CD4-positive, alpha-beta memory T cell (primary cell): ENCODE measurements at regions of chr17 and their contacts with region 1.

Region 1: GRCh38 chr17:30323895-30324319 is 9.9 kb downstream of the TMIGD1 start:
- DNase-seq: peak; percentile 34 to 71 (median 48)
- H3K4me3 ChIP-seq: peak overlapping the region; percentile 9 to 14
- H3K4me3 Mint-ChIP-seq: peak overlapping the region; percentile 62 to 80 (median 70)
- H3K27ac ChIP-seq: peak overlapping the region; percentile 45
- H3K27ac Mint-ChIP-seq: peak overlapping the region; percentile 82 to 96 (median 93)
- H3K4me1 ChIP-seq: peaks cover 48% of the 10 kb centered on the region
- H3K4me1 Mint-ChIP-seq: peaks cover 36 to 54% (median 41%) of the 10 kb centered on the region in 4 donors
- H3K27me3 ChIP-seq: no peaks in the 10 kb centered on the region
- H3K27me3 Mint-ChIP-seq: no peaks in the 10 kb centered on the region

Region 2: GRCh38 chr17:30021708-30022317 is 302.1 kb before region 1 on chr17:
- CTCF ChIA-PET with region 1: no interaction called
- POLR2A ChIA-PET with region 1: no interaction called
- intact Hi-C with region 1: no loop called
- DNase-seq: peak; percentile 25 to 53 (median 48)
- H3K4me3 ChIP-seq: no peak overlapping the region
- H3K4me3 Mint-ChIP-seq: no peak overlapping the region
- H3K27ac ChIP-seq: no peak overlapping the region
- H3K27ac Mint-ChIP-seq: no peak overlapping the region
- H3K4me1 ChIP-seq: no peaks in the 10 kb centered on the region
- H3K4me1 Mint-ChIP-seq: peaks cover 0 to 2% (median under 1%) of the 10 kb centered on the region in 4 donors
- H3K27me3 ChIP-seq: peaks cover 2% of the 10 kb centered on the region
- H3K27me3 Mint-ChIP-seq: peaks cover 0 to 2% of the 10 kb centered on the region in 2 donors

Region 3: DNA sequence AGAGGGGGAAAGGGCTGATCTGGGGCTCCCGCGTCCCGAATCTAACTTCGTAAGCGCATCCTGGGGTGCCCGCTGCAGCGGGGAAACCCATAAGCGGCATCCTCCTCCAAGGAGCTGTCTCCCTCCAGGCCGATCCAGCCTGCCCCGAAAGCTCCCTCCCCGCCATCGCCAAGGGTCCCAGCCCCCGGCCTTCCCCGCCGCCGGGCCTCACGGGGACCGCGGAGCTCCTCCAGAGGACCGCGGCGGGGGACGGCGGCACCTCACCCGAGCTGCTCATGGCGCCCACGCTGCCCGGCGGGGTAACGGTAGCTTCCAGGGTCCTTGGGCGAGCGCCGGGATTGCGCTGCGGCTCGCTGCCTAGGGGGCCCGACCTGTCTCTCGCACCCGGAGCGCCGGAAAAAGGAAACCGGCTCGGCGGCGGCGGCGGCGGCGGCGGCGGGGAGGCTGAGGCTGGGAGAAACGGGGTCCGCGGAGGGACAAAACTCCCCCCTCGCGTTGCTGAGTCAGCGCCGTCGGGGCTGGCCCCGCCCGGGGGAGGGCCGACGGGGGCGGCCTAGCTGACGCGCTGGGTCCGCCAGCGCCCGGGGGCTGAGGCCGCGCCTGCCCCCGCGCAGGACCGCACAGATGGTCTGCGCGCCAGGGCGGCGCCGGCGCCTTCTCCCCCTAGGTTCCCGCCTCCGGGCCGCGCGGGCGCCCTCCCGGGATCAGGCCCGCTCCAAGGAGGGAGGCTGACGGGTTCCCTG is 32.2 kb before region 1 on chr17 and contains the start of gene BLMH:
- CTCF ChIA-PET with region 1: interaction called, 25 read pairs
- POLR2A ChIA-PET with region 1: interaction called, 83 read pairs
- intact Hi-C with region 1: loop called (anchors 1 kb)
- DNase-seq: peak; percentile 68 to 82 (median 76)
- H3K4me3 ChIP-seq: peak within 1 kb of the TSS; percentile 77 to 80
- H3K4me3 Mint-ChIP-seq: peak within 1 kb of the TSS; percentile 89 to 97 (median 96)
- H3K27ac ChIP-seq: peak within 1 kb of the TSS; percentile 68
- H3K27ac Mint-ChIP-seq: peak within 1 kb of the TSS; percentile 87 to 94 (median 92)
- H3K4me1 ChIP-seq: peaks cover 24% of the 10 kb centered on the region
- H3K4me1 Mint-ChIP-seq: peaks cover 17 to 20% (median 18%) of the 10 kb centered on the region in 4 donors
- H3K27me3 ChIP-seq: no peaks in the 10 kb centered on the region
- H3K27me3 Mint-ChIP-seq: no peaks in the 10 kb centered on the region
- total RNA-seq, gene BLMH: 54.0 to 57.6 TPM

Region 4: DNA sequence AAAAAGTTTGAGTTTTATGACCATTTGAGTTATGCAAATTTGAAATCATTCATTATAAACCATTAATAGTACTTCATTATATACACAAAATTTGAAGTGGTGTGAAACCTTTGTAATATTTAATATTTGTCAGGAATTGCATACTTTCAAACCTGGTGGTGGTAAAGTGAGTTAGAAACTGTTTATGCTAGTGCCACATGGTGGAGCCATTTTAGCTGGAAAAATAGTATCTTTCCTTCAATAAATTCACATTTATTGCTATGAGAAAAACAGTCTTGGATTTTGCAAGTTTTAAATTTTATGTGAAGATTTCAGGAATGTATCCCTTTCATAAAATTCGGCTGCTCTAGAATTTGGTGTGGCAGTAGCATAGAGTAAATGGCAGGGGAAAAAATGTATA is 24.9 kb before region 1 on chr17:
- CTCF ChIA-PET with region 1: interaction called, 16 read pairs
- POLR2A ChIA-PET with region 1: interaction called, 5 read pairs
- intact Hi-C with region 1: no loop called
- DNase-seq: peak in 1 of 5 donors; percentile 13
- H3K4me3 ChIP-seq: no peak overlapping the region
- H3K4me3 Mint-ChIP-seq: no peak overlapping the region
- H3K27ac ChIP-seq: no peak overlapping the region
- H3K27ac Mint-ChIP-seq: no peak overlapping the region
- H3K4me1 ChIP-seq: no peaks in the 10 kb centered on the region
- H3K4me1 Mint-ChIP-seq: peaks cover 1 to 9% (median 8%) of the 10 kb centered on the region in 4 donors
- H3K27me3 ChIP-seq: no peaks in the 10 kb centered on the region
- H3K27me3 Mint-ChIP-seq: no peaks in the 10 kb centered on the region